Activated CD4-positive, alpha-beta T cell treated with anti-CD3 and anti-CD28 coated beads, Interleukin-2, amount 10 ng/mL, durations not matched to agents 24 days and 14 days (primary cell): ENCODE measurements at regions of chr1 and their contacts with region 1.

Region 1: GRCh38 chr1:212455803-212456528 is 23.2 kb downstream of the NENF start:
- DNase-seq: peak; percentile 95
- H3K4me3 Mint-ChIP-seq: no peak overlapping the region
- H3K27ac Mint-ChIP-seq: no peak overlapping the region
- H3K4me1 Mint-ChIP-seq: peaks cover 12% of the 10 kb centered on the region
- H3K27me3 Mint-ChIP-seq: no peaks in the 10 kb centered on the region

Region 2: DNA sequence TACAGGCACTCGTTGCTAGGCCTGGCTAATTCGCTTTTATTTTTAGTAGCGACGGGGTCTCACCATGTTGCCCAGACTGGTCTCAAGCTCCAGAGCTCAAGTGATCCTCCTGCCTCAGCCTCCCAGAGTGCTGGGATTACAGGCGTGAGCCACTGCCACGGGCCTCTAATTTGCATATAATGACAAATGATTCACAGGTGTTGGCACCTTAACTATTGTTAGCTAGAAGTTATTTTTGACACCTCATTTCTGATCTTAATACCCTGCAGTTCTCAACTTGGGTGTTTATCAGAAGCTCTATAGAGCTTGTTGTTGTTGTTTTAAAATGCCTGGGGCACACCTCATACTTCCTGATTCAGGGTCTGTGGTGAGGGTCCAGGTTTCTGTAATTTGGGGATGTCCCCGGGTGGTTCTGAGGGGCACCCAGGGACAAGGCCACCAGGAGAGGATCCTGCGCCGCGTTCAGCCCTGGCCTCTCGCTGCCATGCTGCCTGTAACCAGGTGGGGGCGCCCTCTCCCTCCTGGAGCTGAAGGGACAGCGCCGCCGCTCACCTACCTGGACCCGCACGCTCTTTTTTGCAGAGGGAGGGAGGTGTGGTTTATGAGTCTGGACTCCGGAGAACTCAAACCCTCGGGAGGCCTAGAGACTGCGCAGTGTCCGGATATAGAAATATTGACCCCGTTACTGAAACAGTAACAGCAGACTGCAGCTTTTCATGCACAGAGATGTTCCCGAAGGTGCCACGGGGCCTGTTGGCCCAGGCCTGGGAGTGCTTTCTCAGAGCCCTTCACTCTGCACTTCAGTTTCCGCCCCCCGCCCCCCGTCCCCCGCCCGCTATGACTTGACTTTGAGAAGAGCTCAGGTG is 757.6 kb before region 1 on chr1:
- intact Hi-C with region 1: loop called (anchors 5 kb)
- DNase-seq: peak; percentile 96
- H3K4me3 Mint-ChIP-seq: peak overlapping the region; percentile 63
- H3K27ac Mint-ChIP-seq: no peak overlapping the region
- H3K4me1 Mint-ChIP-seq: peaks cover 30% of the 10 kb centered on the region
- H3K27me3 Mint-ChIP-seq: peaks cover 20% of the 10 kb centered on the region

Region 3: GRCh38 chr1:211885747-211886522 is 570.0 kb before region 1 on chr1:
- intact Hi-C with region 1: no loop called
- DNase-seq: no peak
- H3K4me3 Mint-ChIP-seq: no peak overlapping the region
- H3K27ac Mint-ChIP-seq: no peak overlapping the region
- H3K4me1 Mint-ChIP-seq: peaks cover 15% of the 10 kb centered on the region
- H3K27me3 Mint-ChIP-seq: peaks cover 16% of the 10 kb centered on the region

Region 4: DNA sequence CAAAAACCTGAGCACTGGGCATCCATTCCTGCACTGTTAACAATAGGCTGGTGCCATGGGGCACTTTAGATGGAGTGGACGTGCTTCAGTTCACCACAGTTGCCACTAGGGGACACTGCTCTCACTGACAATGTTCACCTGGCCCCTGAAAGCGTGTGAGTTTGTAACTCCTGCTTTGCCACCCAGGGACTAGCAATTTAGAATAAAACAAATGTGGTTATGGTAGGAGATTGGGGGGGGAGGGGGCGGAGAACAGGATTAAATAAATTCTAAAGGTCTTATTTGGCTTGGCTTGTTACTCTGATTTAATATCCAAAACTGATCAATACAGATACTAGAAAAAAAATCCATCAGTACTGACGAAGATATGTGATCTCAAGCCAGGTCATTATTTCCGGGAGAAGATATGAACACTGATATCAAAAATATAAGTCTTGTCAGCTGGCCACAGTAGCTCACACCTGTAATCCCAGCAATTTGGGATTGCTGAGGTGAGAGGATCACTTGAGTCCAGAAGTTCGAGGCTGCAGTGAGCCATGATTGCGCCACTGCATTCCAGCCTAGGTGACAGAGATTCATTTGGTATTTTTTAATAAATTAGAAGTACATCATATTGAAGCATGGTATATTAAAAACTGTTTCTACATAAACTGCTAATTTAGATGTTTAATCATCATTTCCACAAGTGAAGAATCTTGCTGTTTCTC is 443.8 kb before region 1 on chr1:
- intact Hi-C with region 1: loop called (anchors 1 kb)
- DNase-seq: peak; percentile 89
- H3K4me3 Mint-ChIP-seq: no peak overlapping the region
- H3K27ac Mint-ChIP-seq: no peak overlapping the region
- H3K4me1 Mint-ChIP-seq: peaks cover 3% of the 10 kb centered on the region
- H3K27me3 Mint-ChIP-seq: no peaks in the 10 kb centered on the region

Region 5: GRCh38 chr1:212062832-212063438 is 393.0 kb before region 1 on chr1:
- intact Hi-C with region 1: loop called (anchors 2 kb)
- DNase-seq: no peak
- H3K4me3 Mint-ChIP-seq: no peak overlapping the region
- H3K27ac Mint-ChIP-seq: no peak overlapping the region
- H3K4me1 Mint-ChIP-seq: peaks cover 19% of the 10 kb centered on the region
- H3K27me3 Mint-ChIP-seq: no peaks in the 10 kb centered on the region

Region 6: GRCh38 chr1:212302745-212303383 is 153.1 kb before region 1 on chr1:
- intact Hi-C with region 1: loop called (anchors 5 kb)
- DNase-seq: no peak
- H3K4me3 Mint-ChIP-seq: no peak overlapping the region
- H3K27ac Mint-ChIP-seq: peak overlapping the region; percentile 32
- H3K4me1 Mint-ChIP-seq: peaks cover 33% of the 10 kb centered on the region
- H3K27me3 Mint-ChIP-seq: no peaks in the 10 kb centered on the region

Region 7: GRCh38 chr1:212368073-212368484 is 87.9 kb before region 1 on chr1:
- intact Hi-C with region 1: loop called (anchors 1 kb)
- DNase-seq: peak; percentile 88
- H3K4me3 Mint-ChIP-seq: no peak overlapping the region
- H3K27ac Mint-ChIP-seq: no peak overlapping the region
- H3K4me1 Mint-ChIP-seq: no peaks in the 10 kb centered on the region
- H3K27me3 Mint-ChIP-seq: no peaks in the 10 kb centered on the region

Region 8: GRCh38 chr1:212401838-212402582 is 54.0 kb before region 1 on chr1:
- intact Hi-C with region 1: no loop called
- DNase-seq: no peak
- H3K4me3 Mint-ChIP-seq: no peak overlapping the region
- H3K27ac Mint-ChIP-seq: no peak overlapping the region
- H3K4me1 Mint-ChIP-seq: peaks cover 8% of the 10 kb centered on the region
- H3K27me3 Mint-ChIP-seq: no peaks in the 10 kb centered on the region